ENCODE measurements at regions of chr19 and their contacts with region 1.

Region 1: DNA sequence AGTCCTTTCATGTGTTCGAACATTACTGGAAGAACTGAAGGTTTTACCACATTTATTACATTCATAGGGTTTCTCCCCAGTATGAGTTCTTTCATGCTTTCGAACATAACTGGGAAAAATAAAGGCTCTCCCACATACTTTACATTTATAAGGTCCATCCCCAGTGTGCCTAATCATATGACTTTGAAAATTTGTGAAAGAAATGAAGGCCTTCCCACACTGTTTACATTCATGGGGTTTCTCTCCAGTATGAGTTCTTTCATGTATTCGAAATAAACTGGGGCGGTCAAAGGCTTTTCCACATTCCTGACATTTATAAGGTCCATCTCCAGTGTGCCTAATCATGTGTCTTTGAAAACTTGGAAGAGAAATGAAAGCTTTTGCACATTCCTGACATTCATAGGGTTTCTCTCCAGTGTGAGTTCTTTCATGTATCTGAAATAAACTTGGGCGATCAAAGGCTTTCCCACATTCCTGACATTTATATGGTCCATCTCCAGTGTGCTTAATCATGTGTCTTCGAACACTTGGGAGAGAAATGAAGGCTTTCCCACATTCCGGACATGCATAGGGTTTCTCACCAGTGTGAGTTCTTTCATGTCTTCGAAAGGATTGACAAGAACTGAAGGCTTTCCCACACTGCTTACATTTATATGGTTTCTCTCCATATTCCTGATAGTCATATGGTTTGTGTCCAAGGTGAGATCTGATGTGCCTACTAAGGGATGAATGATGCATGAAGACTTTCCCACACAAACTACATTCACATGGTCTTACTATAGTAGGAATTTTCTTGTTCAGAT is 24.0 kb downstream of the ZNF564 start:
- DNase-seq: no peak
- ATAC-seq: no peak
- H3K4me3 Mint-ChIP-seq: no peak overlapping the region
- H3K27ac Mint-ChIP-seq: no peak overlapping the region
- H3K4me1 Mint-ChIP-seq: no peaks in the 10 kb centered on the region
- H3K27me3 Mint-ChIP-seq: no peaks in the 10 kb centered on the region

Region 2: GRCh38 chr19:11949201-11949600 is 578.0 kb before region 1 on chr19:
- CTCF ChIA-PET with region 1: no interaction called
- POLR2A ChIA-PET with region 1: no interaction called
- intact Hi-C with region 1: loop called in 1 of 2 experiments (anchors 10 kb)
- DNase-seq: no peak
- ATAC-seq: no peak
- H3K4me3 Mint-ChIP-seq: no peak overlapping the region
- H3K27ac Mint-ChIP-seq: no peak overlapping the region
- H3K4me1 Mint-ChIP-seq: no peaks in the 10 kb centered on the region
- H3K27me3 Mint-ChIP-seq: no peaks in the 10 kb centered on the region

Region 3: DNA sequence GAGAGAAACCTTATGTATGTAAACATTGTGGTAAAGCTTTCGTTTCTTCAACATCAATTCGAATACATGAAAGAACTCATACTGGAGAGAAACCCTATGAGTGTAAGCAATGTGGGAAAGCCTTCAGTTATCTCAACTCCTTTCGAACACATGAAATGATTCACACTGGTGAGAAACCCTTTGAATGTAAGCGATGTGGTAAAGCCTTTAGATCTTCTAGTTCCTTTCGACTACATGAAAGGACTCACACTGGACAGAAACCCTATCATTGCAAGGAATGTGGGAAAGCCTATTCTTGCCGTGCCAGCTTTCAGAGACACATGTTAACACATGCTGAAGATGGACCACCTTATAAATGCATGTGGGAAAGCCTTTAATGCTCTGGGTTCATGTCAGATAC is 339.6 kb before region 1 on chr19:
- CTCF ChIA-PET with region 1: no interaction called
- POLR2A ChIA-PET with region 1: interaction called, 3 read pairs
- intact Hi-C with region 1: loop called in 1 of 2 experiments (anchors 5 kb)
- DNase-seq: no peak
- ATAC-seq: no peak
- H3K4me3 Mint-ChIP-seq: no peak overlapping the region
- H3K27ac Mint-ChIP-seq: no peak overlapping the region
- H3K4me1 Mint-ChIP-seq: peaks cover 7% of the 10 kb centered on the region
- H3K27me3 Mint-ChIP-seq: no peaks in the 10 kb centered on the region

Region 4: GRCh38 chr19:12272980-12273901 is 254.0 kb before region 1 on chr19:
- CTCF ChIA-PET with region 1: no interaction called
- POLR2A ChIA-PET with region 1: no interaction called
- intact Hi-C with region 1: loop called in 1 of 2 experiments (anchors 5 kb)
- DNase-seq: no peak
- ATAC-seq: no peak
- H3K4me3 Mint-ChIP-seq: no peak overlapping the region
- H3K27ac Mint-ChIP-seq: no peak overlapping the region
- H3K4me1 Mint-ChIP-seq: peaks cover 5% of the 10 kb centered on the region
- H3K27me3 Mint-ChIP-seq: no peaks in the 10 kb centered on the region

Region 5: DNA sequence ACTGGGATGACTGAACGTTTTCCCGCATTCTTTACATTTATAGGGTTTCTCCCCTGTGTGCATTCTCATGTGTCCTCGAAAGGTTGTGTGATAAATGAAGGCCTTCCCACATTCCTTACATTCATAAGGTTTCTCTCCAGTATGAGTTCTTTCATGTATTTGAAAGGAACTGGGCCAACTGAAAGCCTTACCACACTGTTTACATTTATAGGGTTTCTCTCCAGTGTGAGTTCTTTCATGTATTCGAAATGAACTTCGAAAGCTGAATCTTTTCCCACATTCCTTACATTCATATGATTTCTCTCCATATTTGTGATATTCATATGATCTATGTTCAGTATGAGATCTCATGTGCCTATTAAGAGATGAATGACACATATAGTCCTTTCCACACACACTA is 62.0 kb before region 1 on chr19:
- CTCF ChIA-PET with region 1: no interaction called
- POLR2A ChIA-PET with region 1: no interaction called
- intact Hi-C with region 1: loop called (anchors 5 to 10 kb)
- DNase-seq: no peak
- ATAC-seq: no peak
- H3K4me3 Mint-ChIP-seq: no peak overlapping the region
- H3K27ac Mint-ChIP-seq: no peak overlapping the region
- H3K4me1 Mint-ChIP-seq: no peaks in the 10 kb centered on the region
- H3K27me3 Mint-ChIP-seq: no peaks in the 10 kb centered on the region

Region 6: DNA sequence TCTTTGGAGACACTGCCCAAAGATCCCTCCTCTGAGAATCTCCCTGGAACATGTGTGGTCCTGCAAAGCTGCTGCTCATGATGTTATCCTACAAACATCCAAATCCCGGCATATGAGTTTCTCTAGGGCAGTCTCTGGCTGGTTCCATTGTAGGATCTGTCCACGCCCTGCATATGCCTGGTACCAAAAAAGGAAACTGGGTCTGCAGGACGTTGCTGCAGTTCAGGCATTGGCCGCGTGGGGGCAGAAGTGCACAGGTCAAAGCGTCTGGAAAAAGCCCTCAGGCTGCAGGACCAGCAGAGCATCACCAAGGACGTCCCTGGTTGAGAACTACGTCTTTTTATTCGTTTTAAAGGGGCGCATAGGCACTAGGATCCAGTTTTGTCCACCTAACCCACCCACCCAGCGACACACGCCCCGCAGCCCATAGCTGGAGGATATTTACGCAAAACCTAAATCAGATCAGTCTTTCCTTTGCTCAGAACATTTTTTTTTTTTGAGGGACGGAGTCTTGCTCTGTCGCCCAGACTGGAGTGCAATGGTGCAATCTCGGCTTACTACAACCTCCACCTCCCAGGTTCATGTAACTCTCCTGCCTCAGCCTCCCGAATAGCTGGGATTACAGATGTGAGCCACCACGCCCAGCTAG is 36.9 kb after region 1 on chr19:
- CTCF ChIA-PET with region 1: no interaction called
- POLR2A ChIA-PET with region 1: no interaction called
- intact Hi-C with region 1: no loop called
- DNase-seq: peak; percentile 95
- ATAC-seq: peak; percentile 98
- H3K4me3 Mint-ChIP-seq: peak overlapping the region; percentile 25
- H3K27ac Mint-ChIP-seq: no peak overlapping the region
- H3K4me1 Mint-ChIP-seq: peaks cover 5% of the 10 kb centered on the region
- H3K27me3 Mint-ChIP-seq: no peaks in the 10 kb centered on the region